Activated CD8-positive, alpha-beta memory T cell treated with anti-CD3 and anti-CD28 coated beads, Interleukin-2, amount 10 ng/mL, durations not matched to agents 7 days and 5 days (primary cell): ENCODE measurements at regions of chr17 and their contacts with region 1.

Region 1: DNA sequence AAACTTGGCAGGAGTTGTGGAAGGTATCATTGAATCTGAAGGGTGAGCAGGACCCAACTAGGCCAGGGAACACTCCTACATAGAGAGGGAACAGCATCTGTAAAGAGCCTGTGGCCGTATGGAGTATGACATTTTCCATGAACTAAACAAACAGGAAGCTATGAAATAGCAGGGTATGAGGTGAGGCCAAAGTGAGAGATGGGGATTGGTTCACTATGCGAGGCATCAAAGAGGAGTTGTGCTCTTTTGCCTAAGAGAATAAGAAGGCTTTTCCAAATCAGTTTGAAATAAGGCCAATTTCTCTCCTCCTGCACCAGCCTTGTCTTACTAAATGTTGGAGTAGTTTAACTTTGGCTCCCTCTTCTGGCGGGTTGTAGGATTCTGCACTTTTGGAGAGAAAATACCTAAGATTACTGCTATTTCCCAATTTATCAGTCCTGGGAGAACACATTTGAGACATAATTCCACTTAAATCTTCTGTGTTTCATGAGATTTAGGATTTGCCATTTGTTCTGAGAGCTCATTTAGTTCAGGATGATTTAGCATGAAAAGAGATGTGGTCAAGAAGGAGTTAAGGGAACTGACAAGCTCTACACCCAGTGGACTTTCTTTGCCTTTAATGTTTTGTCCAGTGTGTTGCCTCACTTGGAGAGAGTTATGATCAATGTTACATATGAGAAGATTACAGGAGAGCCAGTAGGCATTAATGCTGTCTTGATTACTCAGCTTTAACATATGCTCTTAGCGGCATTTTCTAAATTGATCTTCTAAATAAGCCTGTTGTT is 55.4 kb downstream of the TNRC6C start:
- DNase-seq: peak; percentile 68
- ATAC-seq: peak; percentile 55
- H3K4me3 Mint-ChIP-seq: no peak overlapping the region
- H3K27ac Mint-ChIP-seq: no peak overlapping the region
- H3K4me1 Mint-ChIP-seq: peaks cover 3% of the 10 kb centered on the region
- H3K27me3 Mint-ChIP-seq: no peaks in the 10 kb centered on the region

Region 2: GRCh38 chr17:77542551-77543490 is 471.1 kb before region 1 on chr17:
- CTCF ChIA-PET with region 1: interaction called, 31 read pairs
- DNase-seq: peak; percentile 75
- ATAC-seq: peak; percentile 88
- H3K4me3 Mint-ChIP-seq: no peak overlapping the region
- H3K27ac Mint-ChIP-seq: no peak overlapping the region
- H3K4me1 Mint-ChIP-seq: peaks cover 4% of the 10 kb centered on the region
- H3K27me3 Mint-ChIP-seq: peaks cover 47% of the 10 kb centered on the region

Region 3: DNA sequence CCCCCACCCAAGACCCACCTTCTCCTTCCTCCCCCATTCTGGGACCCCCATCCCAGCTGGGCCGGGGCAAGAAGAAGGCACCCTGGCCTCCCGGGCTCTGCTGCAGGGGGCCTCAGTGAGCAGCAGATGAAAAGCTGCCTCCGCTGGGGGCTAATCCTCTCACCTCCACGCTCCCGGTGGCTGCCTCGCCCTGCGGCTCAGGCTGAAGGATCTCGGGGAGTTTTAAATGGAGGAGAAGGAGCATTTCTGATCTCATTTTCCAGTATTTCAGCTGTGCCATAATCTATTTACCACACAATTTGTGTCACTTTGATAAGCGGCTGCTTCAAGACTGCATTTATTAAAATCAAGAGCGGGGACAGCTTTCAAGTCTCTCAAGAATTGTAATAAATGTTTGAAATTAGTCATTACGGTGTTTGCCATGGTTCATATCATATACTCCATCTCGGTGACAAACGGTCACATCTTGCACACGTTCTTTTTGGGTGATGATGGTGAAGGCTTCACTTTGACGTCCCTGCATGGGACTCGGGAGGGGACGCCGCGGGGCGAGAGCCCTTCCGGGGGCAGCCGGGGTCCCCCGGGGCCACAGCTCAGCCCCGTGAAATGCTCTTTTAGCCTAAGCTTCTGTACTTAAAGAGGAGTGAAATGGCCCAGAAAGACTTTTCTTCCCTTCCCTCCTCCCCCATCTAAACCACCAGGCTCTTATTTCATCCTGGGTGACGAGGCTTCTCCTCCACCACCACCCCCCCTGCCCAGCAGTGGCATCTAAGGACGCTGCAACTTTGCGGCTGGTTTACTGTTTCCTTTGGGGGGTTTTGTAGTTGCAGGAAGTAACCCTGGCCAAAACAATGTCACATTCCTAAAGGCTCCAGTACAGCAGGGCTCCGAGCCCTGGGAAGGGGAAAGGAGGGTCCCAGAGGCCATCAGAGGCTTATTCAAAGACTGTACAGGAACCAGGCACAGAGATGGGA is 368.5 kb before region 1 on chr17:
- CTCF ChIA-PET with region 1: interaction called, 13 read pairs
- DNase-seq: peak; percentile 85
- ATAC-seq: peak; percentile 81
- H3K4me3 Mint-ChIP-seq: peak overlapping the region; percentile 64
- H3K27ac Mint-ChIP-seq: peak overlapping the region; percentile 92
- H3K4me1 Mint-ChIP-seq: peaks cover 34% of the 10 kb centered on the region
- H3K27me3 Mint-ChIP-seq: peaks cover 3% of the 10 kb centered on the region

Region 4: GRCh38 chr17:77772461-77772897 is 241.4 kb before region 1 on chr17:
- CTCF ChIA-PET with region 1: interaction called, 19 read pairs
- DNase-seq: peak; percentile 78
- ATAC-seq: peak; percentile 95
- H3K4me3 Mint-ChIP-seq: no peak overlapping the region
- H3K27ac Mint-ChIP-seq: no peak overlapping the region
- H3K4me1 Mint-ChIP-seq: peaks cover 11% of the 10 kb centered on the region
- H3K27me3 Mint-ChIP-seq: peaks cover 2% of the 10 kb centered on the region

Region 5: GRCh38 chr17:77957857-77958715 is 55.8 kb before region 1 on chr17 and contains the start of gene TNRC6C:
- CTCF ChIA-PET with region 1: interaction called, 12 read pairs
- DNase-seq: peak; percentile 100
- ATAC-seq: peak; percentile 91
- H3K4me3 Mint-ChIP-seq: peak within 1 kb of the TSS; percentile 84
- H3K27ac Mint-ChIP-seq: peak within 1 kb of the TSS; percentile 75
- H3K4me1 Mint-ChIP-seq: peaks cover 36% of the 10 kb centered on the region
- H3K27me3 Mint-ChIP-seq: peaks cover 34% of the 10 kb centered on the region
- total RNA-seq, gene TNRC6C: 24.9 to 39.3 TPM

Region 6: DNA sequence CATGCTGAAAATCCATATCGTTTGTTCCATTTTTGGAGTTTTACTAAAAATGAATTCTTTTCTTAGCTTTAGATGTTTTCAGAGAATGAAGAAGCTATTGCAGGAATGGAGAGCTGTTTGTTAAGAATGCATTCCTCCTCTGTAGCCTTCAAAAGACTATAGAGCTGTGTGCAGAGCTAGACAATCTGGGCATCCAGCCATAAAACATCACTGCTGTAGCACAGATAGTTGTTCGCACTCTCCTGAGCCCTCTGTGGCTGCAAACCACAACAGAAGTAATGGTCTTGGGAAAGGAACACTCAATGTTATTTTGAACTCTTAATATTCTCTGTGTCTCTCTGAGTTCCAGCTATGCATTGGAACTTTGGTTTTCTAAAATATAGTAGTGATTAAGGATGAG is 50.4 kb before region 1 on chr17:
- CTCF ChIA-PET with region 1: interaction called, 12 read pairs
- DNase-seq: no peak
- ATAC-seq: no peak
- H3K4me3 Mint-ChIP-seq: no peak overlapping the region
- H3K27ac Mint-ChIP-seq: no peak overlapping the region
- H3K4me1 Mint-ChIP-seq: peaks cover 44% of the 10 kb centered on the region
- H3K27me3 Mint-ChIP-seq: no peaks in the 10 kb centered on the region